ENCODE measurements at regions of chr3 and their contacts with region 1.

Region 1: DNA sequence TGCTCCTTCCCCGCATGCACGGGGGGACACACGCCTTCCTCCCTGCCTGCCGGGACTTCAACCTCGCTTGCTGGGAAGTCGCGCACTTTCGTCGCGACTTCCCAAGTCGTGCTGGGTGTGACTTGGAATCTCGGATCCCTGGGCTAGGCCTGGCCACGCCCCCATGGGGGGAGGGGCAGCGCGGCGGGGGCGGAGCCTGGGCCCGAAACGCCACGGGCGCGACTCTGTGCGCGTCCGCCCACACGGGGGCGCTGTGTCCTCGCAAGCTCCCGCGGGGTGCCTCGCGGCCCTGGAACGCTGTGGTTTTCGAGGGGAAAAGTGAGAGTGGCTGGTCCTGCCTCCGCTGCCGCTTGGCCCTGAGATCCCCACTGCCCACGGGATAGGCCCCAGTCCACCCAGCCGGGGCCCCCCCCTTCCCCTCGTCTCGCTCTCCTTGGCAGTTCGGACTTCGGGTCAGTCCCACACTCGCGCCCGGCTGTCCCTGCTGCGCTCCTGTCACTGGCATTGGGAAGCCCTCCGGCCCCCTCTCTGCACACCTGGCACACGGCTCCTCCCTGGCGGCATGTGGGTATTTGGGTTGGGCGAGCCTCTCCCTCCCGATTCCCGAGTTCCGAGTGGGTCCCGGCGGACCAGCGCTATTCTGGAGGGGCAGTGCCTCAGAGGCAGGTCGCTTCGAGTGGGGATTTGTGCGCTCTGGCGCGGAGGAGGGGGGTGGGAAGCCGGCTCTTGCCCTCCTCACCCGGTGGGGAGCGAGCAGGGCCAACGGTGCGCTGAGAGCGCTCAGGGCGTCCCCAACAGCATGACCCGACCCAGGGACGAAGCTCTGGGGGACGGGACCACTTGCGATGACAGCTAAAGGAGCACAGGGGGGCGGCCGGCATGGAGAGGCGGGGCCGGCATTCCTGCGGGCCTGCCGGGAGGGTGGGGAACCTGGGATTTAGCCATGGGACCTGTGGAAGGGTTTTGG is 23.6 kb downstream of the SEC61A1 start:
- DNase-seq: peak; percentile 91
- ATAC-seq: peak; percentile 88
- H3K4me3 ChIP-seq: peak overlapping the region; percentile 38 to 65 (median 60)
- H3K4me3 Mint-ChIP-seq: peak overlapping the region; percentile 85
- H3K27ac ChIP-seq: peak overlapping the region in 1 of 2 donors; percentile 28
- H3K27ac Mint-ChIP-seq: no peak overlapping the region
- H3K4me1 ChIP-seq: peaks cover 17 to 26% of the 10 kb centered on the region in 2 donors
- H3K4me1 Mint-ChIP-seq: peaks cover 17% of the 10 kb centered on the region
- H3K27me3 ChIP-seq: peaks cover 0 to 8% (median 1%) of the 10 kb centered on the region in 4 experiments
- H3K27me3 Mint-ChIP-seq: no peaks in the 10 kb centered on the region
- CTCF ChIP-seq: peak; percentile 97

Region 2: GRCh38 chr3:128123538-128124368 is 48.0 kb after region 1 on chr3 and contains the start of gene RUVBL1:
- CTCF ChIA-PET with region 1: interaction called, 6 read pairs
- POLR2A ChIA-PET with region 1: interaction called, 3 read pairs
- intact Hi-C with region 1: loop called (anchors 1 kb)
- DNase-seq: peak; percentile 97
- ATAC-seq: peak; percentile 97
- H3K4me3 ChIP-seq: peak within 1 kb of the TSS; percentile 68 to 94 (median 85)
- H3K4me3 Mint-ChIP-seq: peak within 1 kb of the TSS; percentile 98
- H3K27ac ChIP-seq: peak within 1 kb of the TSS; percentile 79 to 84
- H3K27ac Mint-ChIP-seq: peak within 1 kb of the TSS; percentile 86
- H3K4me1 ChIP-seq: peaks cover 15 to 20% of the 10 kb centered on the region in 2 donors
- H3K4me1 Mint-ChIP-seq: peaks cover 22% of the 10 kb centered on the region
- H3K27me3 ChIP-seq: no peaks in the 10 kb centered on the region
- H3K27me3 Mint-ChIP-seq: no peaks in the 10 kb centered on the region
- CTCF ChIP-seq: no peak
- total RNA-seq, gene RUVBL1: 19.9 and 20.4 TPM in 2 replicates

Region 3: GRCh38 chr3:128133273-128134084 is 57.7 kb after region 1 on chr3:
- CTCF ChIA-PET with region 1: interaction called, 12 read pairs
- POLR2A ChIA-PET with region 1: no interaction called
- intact Hi-C with region 1: loop called (anchors 1 kb)
- DNase-seq: peak; percentile 49
- ATAC-seq: peak; percentile 49
- H3K4me3 ChIP-seq: no peak overlapping the region
- H3K4me3 Mint-ChIP-seq: no peak overlapping the region
- H3K27ac ChIP-seq: no peak overlapping the region
- H3K27ac Mint-ChIP-seq: no peak overlapping the region
- H3K4me1 ChIP-seq: no peaks in the 10 kb centered on the region
- H3K4me1 Mint-ChIP-seq: no peaks in the 10 kb centered on the region
- H3K27me3 ChIP-seq: peaks cover 0 to 3% (median 0%) of the 10 kb centered on the region in 4 experiments
- H3K27me3 Mint-ChIP-seq: peaks cover 17% of the 10 kb centered on the region
- CTCF ChIP-seq: peak; percentile 55

Region 4: DNA sequence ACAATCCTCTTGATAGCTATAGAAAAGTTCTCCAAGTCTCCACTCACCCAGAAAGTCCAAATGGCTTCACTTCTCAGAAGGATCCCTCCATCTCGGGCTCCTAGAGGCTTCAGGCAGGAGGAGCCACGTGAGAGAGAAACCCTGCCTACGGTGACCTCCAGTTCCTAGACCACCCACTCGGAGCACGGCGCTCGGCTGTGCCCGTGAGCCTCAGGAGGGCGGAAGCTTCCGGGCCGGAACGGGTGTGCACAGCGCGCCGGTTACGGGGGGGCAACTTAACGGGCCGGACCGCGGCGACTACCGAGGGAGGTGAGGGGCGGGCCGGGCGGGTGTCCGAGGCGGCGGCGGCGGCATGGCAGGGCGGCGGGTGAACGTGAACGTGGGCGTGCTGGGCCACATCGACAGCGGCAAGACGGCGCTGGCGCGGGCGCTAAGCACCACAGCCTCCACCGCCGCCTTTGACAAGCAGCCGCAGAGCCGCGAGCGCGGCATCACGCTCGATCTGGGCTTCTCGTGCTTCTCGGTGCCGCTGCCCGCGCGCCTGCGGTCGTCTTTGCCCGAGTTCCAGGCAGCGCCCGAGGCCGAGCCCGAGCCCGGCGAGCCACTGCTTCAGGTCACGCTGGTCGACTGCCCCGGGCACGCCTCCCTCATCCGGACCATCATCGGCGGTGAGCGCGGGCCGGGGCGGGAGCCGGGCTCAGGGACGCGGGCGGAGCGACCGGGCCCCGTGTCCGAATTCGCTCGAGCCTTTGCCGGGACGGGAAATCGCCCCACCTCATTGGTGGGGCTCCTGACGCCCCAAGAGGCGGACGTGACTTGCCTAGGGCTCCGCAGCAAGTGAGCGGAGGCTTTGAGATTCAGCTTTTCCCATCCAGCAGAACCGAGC is 77.6 kb after region 1 on chr3 and contains the start of gene EEFSEC:
- CTCF ChIA-PET with region 1: interaction called, 3 read pairs
- POLR2A ChIA-PET with region 1: no interaction called
- intact Hi-C with region 1: loop called (anchors 2 kb)
- DNase-seq: peak; percentile 91
- ATAC-seq: peak; percentile 90
- H3K4me3 ChIP-seq: peak within 1 kb of the TSS; percentile 54 to 91 (median 74)
- H3K4me3 Mint-ChIP-seq: peak within 1 kb of the TSS; percentile 94
- H3K27ac ChIP-seq: peak within 1 kb of the TSS; percentile 70 to 80
- H3K27ac Mint-ChIP-seq: peak within 1 kb of the TSS; percentile 95
- H3K4me1 ChIP-seq: peaks cover 11 to 14% of the 10 kb centered on the region in 2 donors
- H3K4me1 Mint-ChIP-seq: peaks cover 24% of the 10 kb centered on the region
- H3K27me3 ChIP-seq: no peaks in the 10 kb centered on the region
- H3K27me3 Mint-ChIP-seq: no peaks in the 10 kb centered on the region
- CTCF ChIP-seq: no peak
- total RNA-seq, gene EEFSEC: 17.2 and 17.9 TPM in 2 replicates

Region 5: DNA sequence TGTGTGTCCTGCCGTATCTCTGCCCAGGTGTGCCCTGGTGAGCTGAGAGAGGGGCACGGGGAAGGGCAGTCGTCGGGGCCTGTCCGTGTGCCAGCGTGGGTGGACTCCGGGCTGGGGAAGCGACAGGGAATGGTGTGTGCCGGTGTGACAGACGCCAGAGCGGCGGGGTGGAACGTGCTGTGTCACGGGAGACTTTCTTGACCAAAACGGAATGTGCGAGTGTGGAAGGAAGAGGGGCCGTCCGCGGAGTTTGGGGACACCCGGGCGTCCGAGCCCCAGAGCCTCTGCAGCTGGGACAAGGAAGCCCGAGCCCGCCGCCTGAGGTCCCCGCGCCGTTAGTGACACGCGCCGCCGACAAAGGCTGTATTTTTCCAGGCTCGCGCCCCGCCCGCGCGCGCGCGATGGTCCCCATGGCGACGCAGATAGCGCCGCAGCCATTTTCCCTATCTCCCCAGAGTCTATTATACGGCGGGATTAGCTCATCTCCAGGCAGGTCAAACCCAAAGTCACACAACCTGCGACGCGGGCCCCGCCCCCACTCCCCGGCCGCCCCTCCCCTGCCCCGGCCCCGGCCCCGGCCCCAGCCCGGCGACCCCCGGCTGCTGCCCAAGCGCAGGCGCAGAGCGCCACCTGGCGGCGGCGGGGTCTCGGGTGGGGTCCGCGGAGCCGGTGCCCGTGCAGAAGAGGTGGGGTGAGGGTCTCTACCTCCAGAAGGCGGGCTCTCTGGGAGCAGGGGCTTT is 421.8 kb after region 1 on chr3:
- CTCF ChIA-PET with region 1: no interaction called
- POLR2A ChIA-PET with region 1: no interaction called
- intact Hi-C with region 1: loop called (anchors 1 kb)
- DNase-seq: peak; percentile 60
- ATAC-seq: peak; percentile 61
- H3K4me3 ChIP-seq: peak overlapping the region in 4 of 5 experiments; percentile 28 to 57 (median 48)
- H3K4me3 Mint-ChIP-seq: peak overlapping the region; percentile 79
- H3K27ac ChIP-seq: no peak overlapping the region
- H3K27ac Mint-ChIP-seq: no peak overlapping the region
- H3K4me1 ChIP-seq: peaks cover 13 to 17% of the 10 kb centered on the region in 2 donors
- H3K4me1 Mint-ChIP-seq: peaks cover 22% of the 10 kb centered on the region
- H3K27me3 ChIP-seq: peaks cover 0 to 54% (median 31%) of the 10 kb centered on the region in 4 experiments
- H3K27me3 Mint-ChIP-seq: peaks cover 78% of the 10 kb centered on the region
- CTCF ChIP-seq: peak; percentile 78